ENCODE measurements at regions of chr12 and their contacts with region 1.

Region 1: DNA sequence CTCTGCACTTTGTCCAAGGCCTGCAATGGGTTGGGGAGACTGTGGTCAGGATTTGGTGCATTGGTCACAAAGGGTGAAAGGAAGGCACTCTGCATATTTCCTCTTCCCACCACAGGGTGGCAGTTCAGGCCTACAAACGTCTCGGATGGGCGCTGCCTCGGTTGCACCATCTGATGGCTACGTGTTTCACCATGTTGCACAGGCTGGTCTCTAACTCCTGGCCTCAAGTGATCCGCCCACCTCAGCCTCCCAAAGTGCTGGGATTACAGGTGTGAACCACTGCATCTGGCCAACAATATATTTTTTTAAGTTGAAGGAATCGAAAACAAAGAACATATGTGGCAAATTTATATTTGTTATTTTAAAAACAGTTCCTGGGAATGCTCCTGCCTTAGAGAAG is 35.1 kb downstream of the TMBIM6 start:
- DNase-seq: peak in 13 of 14 experiments; percentile 14 to 77 (median 37)
- ATAC-seq: peak; percentile 73
- H3K4me3 ChIP-seq: no peak overlapping the region
- H3K4me3 Mint-ChIP-seq: no peak overlapping the region
- H3K27ac ChIP-seq: no peak overlapping the region
- H3K27ac Mint-ChIP-seq: no peak overlapping the region
- H3K4me1 ChIP-seq: peaks cover 13% of the 10 kb centered on the region
- H3K4me1 Mint-ChIP-seq: peaks cover 10% of the 10 kb centered on the region
- H3K27me3 ChIP-seq: peaks cover 0 to 3% of the 10 kb centered on the region in 2 experiments
- H3K27me3 Mint-ChIP-seq: peaks cover 25% of the 10 kb centered on the region
- CTCF ChIP-seq: peak; percentile 52

Region 2: DNA sequence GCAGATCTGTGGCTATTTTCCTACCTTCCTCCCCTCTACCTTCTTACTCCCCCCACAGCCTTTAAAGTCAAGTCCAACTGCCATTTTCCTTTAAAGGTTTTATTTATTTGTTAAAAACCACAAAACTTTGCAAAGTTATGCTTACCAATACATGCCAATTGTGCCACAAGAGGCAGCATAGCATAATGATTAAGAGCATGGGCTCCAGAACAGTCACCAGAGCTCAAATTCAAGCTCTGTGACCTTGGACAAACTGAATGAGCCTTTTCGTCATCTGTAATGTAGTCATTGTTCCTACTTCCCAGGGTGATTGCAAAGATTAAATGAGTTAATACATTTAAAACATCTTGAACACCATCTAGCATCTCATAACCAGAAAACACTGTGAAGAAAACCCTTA is 56.2 kb before region 1 on chr12:
- CTCF ChIA-PET with region 1: no interaction called
- POLR2A ChIA-PET with region 1: no interaction called
- intact Hi-C with region 1: loop called in 1 of 2 experiments (anchors 10 kb)
- DNase-seq: peak in 1 of 14 experiments; percentile 25
- ATAC-seq: no peak
- H3K4me3 ChIP-seq: no peak overlapping the region
- H3K4me3 Mint-ChIP-seq: no peak overlapping the region
- H3K27ac ChIP-seq: no peak overlapping the region
- H3K27ac Mint-ChIP-seq: no peak overlapping the region
- H3K4me1 ChIP-seq: no peaks in the 10 kb centered on the region
- H3K4me1 Mint-ChIP-seq: no peaks in the 10 kb centered on the region
- H3K27me3 ChIP-seq: peaks cover 0 to 3% of the 10 kb centered on the region in 2 experiments
- H3K27me3 Mint-ChIP-seq: peaks cover 16% of the 10 kb centered on the region
- CTCF ChIP-seq: no peak

Region 3: GRCh38 chr12:49763006-49763591 is 13.3 kb before region 1 on chr12:
- CTCF ChIA-PET with region 1: interaction called, 17 read pairs
- POLR2A ChIA-PET with region 1: no interaction called
- intact Hi-C with region 1: no loop called
- DNase-seq: peak; percentile 61 to 90 (median 76)
- ATAC-seq: peak; percentile 82
- H3K4me3 ChIP-seq: no peak overlapping the region
- H3K4me3 Mint-ChIP-seq: peak overlapping the region; percentile 1
- H3K27ac ChIP-seq: peak overlapping the region; percentile 55 to 71
- H3K27ac Mint-ChIP-seq: peak overlapping the region; percentile 73
- H3K4me1 ChIP-seq: peaks cover 63% of the 10 kb centered on the region
- H3K4me1 Mint-ChIP-seq: peaks cover 62% of the 10 kb centered on the region
- H3K27me3 ChIP-seq: no peaks in the 10 kb centered on the region
- H3K27me3 Mint-ChIP-seq: no peaks in the 10 kb centered on the region
- CTCF ChIP-seq: peak; percentile 87